ENCODE measurements at regions of chr3 and their contacts with region 1.

Region 1: DNA sequence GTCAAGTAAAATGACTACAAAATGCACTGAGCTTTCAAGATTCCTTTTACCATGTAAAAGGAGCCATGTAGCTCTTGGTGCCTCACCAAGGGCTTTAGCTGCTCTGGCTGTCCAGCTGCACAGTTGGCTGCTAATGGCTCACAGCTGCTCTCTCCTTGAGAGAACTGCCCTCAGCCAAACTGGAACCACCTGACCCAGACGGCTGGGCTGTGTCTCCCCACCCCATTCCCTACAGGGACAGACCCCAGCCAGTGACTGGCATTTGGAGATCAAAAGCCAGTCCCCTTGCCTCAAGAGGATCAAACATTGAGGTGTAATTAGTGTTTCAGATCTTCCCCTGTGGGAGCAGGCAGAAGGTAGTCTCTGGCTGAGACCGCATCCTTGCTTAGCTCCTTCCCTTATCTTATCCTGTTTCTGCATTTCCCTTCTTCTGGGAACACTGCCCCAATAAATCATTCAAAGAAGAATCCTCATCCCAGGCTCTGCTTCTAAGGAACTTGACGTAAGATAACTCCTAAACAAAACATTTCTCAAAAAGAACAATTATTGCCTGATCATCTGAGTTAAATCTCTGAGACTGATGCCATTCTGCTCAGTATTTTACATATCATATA is 28.6 kb upstream of the UBE2E2 start:
- DNase-seq: no peak
- H3K4me3 ChIP-seq: no peak overlapping the region
- H3K27ac ChIP-seq: no peak overlapping the region
- H3K27me3 ChIP-seq: peaks cover 28% of the 10 kb centered on the region
- CTCF ChIP-seq: no peak

Region 2: DNA sequence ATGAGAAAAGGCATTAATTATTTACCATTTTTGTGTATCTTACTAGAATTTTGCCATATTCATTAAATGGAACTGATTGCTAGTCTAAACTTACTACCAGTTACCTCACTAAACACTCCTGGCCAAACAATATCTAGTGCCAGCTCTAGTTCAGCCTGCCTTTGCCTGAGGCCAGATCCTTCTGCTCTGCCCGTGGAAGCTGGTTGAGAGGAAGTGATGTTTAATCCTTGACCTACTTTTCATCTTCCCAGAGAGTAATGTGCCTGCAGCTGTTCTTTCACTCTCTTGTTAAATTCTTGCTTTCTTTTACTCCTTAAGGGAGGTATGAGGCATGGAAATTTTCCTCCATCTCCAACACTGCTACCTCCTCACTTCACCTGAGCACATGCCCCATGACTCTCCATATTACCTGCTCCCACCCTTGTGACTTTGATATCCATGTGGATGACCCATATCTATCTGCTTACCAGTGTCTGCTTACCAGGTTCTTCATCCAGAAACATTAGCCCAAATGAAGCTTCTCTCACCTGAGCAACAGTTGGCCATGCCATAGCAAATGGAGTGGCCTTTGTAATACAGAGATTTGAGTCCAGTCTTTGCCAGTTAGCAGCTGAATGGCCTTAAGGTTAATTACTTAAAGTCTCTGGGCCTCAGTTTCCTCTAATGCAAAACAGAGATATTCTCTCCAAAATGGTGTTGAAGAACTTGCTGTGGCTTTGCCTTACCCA is 684.6 kb after region 1 on chr3:
- CTCF ChIA-PET with region 1: interaction called, 11 read pairs
- POLR2A ChIA-PET with region 1: no interaction called
- DNase-seq: no peak
- H3K4me3 ChIP-seq: no peak overlapping the region
- H3K27ac ChIP-seq: no peak overlapping the region
- H3K27me3 ChIP-seq: no peaks in the 10 kb centered on the region
- CTCF ChIP-seq: no peak

Measured in AG04450 (cell line).